ENCODE measurements at regions of chr11 and their contacts with region 1.

Region 1: GRCh38 chr11:114317787-114318137 is 21.6 kb downstream of the NNMT start:
- DNase-seq: peak; percentile 73
- H3K4me3 ChIP-seq: no peak overlapping the region
- H3K27ac ChIP-seq: no peak overlapping the region
- H3K4me1 ChIP-seq: peaks cover 26% of the 10 kb centered on the region
- H3K27me3 ChIP-seq: no peaks in the 10 kb centered on the region
- CTCF ChIP-seq: peak; percentile 50 to 62
- POLR2A ChIP-seq: no peak

Region 2: DNA sequence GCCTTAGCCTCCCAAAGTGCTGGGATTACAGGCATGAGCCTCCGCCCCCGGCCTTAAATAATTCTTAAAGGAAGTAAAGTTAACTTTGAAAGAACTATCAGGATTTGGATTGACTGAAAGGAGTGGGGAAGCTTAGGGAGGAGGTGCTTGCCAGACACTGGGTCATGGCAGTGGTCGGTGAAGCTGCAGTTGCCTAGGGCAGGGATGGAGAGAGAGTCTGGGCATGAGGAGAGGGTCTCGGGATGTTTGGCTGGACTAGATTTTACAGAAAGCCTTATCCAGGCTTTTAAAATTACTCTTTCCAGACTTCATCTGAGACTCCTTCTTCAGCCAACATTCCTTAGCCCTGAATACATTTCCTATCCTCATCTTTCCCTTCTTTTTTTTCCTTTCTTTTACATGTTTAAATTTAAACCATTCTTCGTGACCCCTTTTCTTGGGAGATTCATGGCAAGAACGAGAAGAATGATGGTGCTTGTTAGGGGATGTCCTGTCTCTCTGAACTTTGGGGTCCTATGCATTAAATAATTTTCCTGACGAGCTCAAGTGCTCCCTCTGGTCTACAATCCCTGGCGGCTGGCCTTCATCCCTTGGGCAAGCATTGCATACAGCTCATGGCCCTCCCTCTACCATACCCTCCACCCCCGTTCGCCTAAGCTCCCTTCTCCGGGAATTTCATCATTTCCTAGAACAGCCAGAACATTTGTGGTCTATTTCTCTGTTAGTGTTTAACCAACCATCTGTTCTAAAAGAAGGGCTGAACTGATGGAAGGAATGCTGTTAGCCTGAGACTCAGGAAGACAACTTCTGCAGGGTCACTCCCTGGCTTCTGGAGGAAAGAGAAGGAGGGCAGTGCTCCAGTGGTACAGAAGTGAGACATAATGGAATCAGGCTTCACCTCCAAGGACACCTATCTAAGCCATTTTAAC is 21.8 kb before region 1 on chr11 and contains the start of gene NNMT:
- CTCF ChIA-PET with region 1: interaction called, 6 read pairs
- POLR2A ChIA-PET with region 1: no interaction called
- dilution Hi-C with region 1: no loop called
- intact Hi-C with region 1: loop called (anchors 1 kb)
- DNase-seq: peak; percentile 97
- H3K4me3 ChIP-seq: peak within 1 kb of the TSS; percentile 85 to 99 (median 96)
- H3K27ac ChIP-seq: peak within 1 kb of the TSS; percentile 100
- H3K4me1 ChIP-seq: peaks cover 70% of the 10 kb centered on the region
- H3K27me3 ChIP-seq: no peaks in the 10 kb centered on the region
- CTCF ChIP-seq: peak in 1 of 2 donors; percentile 11
- POLR2A ChIP-seq: peak; percentile 86
- total RNA-seq, gene NNMT: 300 and 330 TPM in 2 replicates

Region 3: GRCh38 chr11:114307524-114308203 is 10.1 kb before region 1 on chr11:
- CTCF ChIA-PET with region 1: interaction called, 5 read pairs
- POLR2A ChIA-PET with region 1: no interaction called
- dilution Hi-C with region 1: no loop called
- intact Hi-C with region 1: loop called (anchors 1 kb)
- DNase-seq: peak; percentile 91
- H3K4me3 ChIP-seq: peak overlapping the region in 2 of 3 experiments; percentile 10 to 39
- H3K27ac ChIP-seq: peak overlapping the region; percentile 79
- H3K4me1 ChIP-seq: peaks cover 29% of the 10 kb centered on the region
- H3K27me3 ChIP-seq: no peaks in the 10 kb centered on the region
- CTCF ChIP-seq: no peak
- POLR2A ChIP-seq: peak; percentile 15

Region 4: DNA sequence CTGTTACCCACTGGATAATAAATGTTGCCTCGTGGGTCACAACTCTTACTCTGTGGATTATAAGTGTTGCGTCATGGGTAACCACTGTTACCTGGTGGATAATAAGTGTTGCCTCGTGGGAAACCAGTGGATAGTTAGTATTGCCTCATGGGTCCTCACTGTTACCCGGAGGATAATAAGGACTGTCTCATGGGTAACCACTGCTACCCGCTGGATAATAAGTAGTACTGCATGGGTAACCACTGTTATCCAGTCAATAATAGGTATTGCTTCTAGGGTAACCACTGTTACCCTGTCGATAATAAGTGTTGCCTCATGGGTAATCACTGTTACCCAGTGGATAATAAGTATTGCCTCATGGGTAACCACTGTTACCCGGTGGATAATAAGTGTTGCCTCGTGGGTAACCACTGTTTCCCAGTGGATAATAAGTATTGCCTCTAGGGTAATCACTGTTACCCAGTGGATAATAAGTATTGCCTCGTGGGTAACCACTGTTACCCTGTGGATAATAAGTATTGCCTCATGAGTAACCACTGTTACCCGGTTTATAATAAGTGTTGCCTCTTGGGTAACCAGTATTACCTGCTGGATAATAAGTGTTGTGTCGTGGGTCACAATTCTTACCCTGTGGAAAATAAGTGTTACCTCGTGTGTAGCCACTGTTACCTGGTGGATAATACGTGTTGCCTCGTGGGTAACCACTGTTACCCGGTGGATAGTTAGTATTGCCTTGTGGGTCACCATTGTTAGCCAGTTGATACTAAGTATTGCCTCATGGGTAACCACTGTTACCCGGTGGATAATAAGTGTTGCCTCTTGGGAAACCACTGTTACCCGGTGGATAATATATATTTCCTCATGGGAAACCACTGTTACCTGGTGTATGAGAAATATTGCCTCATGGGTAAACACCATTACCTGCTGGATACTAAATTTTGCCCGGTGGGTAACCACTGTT is 293.5 kb after region 1 on chr11:
- CTCF ChIA-PET with region 1: no interaction called
- POLR2A ChIA-PET with region 1: no interaction called
- dilution Hi-C with region 1: no loop called
- intact Hi-C with region 1: loop called (anchors 1 kb)
- DNase-seq: no peak
- H3K4me3 ChIP-seq: no peak overlapping the region
- H3K27ac ChIP-seq: no peak overlapping the region
- H3K4me1 ChIP-seq: no peaks in the 10 kb centered on the region
- H3K27me3 ChIP-seq: no peaks in the 10 kb centered on the region
- CTCF ChIP-seq: no peak
- POLR2A ChIP-seq: no peak